ENCODE measurements at regions of chr19 and their contacts with region 1.

Region 1: GRCh38 chr19:45439569-45440254 is 16.0 kb upstream of the ERCC1 start:
- DNase-seq: peak; percentile 73

Region 2: DNA sequence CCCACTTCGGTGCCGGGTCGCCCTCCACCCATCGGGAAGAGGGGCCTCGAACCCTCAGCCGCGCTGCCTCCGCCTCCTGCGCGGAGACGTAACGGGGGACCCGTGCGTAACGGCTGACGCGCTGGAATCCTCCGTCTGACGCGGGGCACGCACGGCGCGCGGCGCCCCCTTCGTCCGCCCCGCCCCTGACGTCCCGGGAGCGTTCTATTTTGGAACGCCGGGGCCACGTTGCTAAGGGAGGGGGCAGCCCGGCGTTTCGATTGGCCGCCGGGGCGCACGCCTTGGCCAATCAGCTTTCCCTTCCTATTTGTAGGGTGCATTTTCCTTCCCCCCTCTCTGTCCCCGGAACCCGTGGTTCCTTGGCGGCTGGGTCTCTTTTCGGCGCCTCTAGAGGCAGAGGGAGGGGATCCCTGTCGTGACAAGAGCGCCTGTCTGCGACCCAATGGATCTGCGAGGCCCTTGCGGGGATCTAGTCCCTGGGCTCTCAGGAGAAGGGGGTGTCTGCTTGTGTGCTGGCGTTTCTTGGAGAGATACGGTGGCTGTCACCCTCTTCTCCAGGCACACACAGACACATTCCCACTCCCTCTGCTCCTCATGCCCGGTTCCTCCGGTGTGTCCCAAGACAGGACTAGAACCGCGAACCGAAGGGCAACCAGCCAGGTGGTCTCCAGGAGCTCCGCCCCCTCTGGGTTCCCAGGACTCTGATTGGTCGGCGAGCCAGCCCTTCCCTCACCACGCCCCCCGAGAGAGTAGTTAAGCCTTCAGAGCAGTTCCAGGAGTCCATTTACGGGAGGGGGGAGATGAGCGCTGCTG is 29.6 kb after region 1 on chr19:
- CTCF ChIA-PET with region 1: interaction called, 12 read pairs
- POLR2A ChIA-PET with region 1: interaction called, 10 read pairs
- DNase-seq: peak; percentile 89

Region 3: GRCh38 chr19:45478454-45479238 is 38.9 kb after region 1 on chr19:
- CTCF ChIA-PET with region 1: interaction called, 93 read pairs
- POLR2A ChIA-PET with region 1: interaction called, 20 read pairs
- DNase-seq: peak; percentile 76

Measured in HEK293T (cell line).